Brain microvascular endothelial cell (primary cell): ENCODE measurements at regions of chr3 and their contacts with region 1.

Region 1: DNA sequence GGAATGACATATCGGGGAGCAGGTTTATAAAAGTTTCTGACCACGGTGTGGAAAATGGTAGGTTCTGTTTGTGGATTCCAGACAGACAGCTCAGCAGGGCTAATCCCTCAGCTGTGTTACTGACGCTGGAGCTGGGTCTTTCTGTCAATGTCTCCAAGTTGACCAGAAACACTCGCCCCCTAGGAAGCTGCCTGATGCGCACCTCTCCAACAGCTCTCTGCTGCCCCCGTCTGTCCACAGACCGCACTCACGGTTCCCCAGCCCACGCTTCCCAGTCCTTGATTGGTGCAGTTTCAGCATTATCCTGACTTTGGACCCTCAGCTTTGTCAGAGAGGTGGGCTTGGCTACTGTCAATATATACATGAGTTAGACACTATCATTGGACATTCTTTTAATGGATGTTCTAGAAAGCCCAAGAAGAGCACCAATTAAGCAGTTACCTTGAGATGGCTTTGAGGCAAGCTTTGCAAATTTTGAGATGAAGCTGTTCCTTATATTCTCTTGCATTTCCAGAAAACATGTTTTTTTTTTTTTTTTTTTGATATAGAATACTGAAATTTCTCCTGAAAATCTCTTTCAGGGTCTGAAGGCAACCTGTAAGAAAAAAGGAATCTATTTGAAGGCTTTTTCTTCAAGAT is 98.9 kb upstream of the TBC1D5 start:
- DNase-seq: peak; percentile 63
- H3K4me3 ChIP-seq: no peak overlapping the region
- H3K27ac ChIP-seq: no peak overlapping the region
- H3K27me3 ChIP-seq: no peaks in the 10 kb centered on the region
- CTCF ChIP-seq: peak; percentile 98

Region 2: GRCh38 chr3:17605032-17605431 is 236.3 kb before region 1 on chr3:
- in situ Hi-C with region 1: loop called (anchors 25 kb)
- DNase-seq: peak; percentile 32
- H3K4me3 ChIP-seq: no peak overlapping the region
- H3K27ac ChIP-seq: no peak overlapping the region
- H3K27me3 ChIP-seq: no peaks in the 10 kb centered on the region
- CTCF ChIP-seq: no peak

Region 3: DNA sequence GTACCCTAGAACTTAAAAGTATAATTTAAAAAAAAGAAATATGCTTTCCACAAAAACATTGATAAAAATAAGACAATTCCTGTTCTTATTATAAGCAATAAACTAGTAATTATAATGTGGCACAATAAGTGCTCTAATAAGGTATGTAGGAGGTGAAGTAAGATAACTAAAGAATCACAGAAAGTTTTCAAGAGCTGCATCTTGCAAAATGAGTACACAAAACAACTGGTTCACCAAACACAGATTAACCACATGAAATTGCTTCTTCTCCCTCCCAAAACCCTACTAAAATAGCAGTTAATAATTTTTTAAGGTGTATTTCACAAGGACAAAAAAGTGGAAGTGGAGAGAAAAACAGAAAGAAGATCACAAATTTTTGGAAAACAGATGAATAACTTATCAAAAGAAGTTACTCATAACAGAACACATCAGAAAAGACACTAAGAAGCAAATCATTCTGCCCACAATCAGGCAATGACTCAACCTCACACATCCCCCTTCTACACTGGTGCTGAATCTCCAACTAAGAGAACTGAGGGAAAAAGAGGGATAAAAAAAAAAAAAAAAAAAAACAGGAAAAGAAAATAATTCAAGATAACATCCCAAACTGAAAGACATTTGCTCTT is 163.1 kb before region 1 on chr3:
- in situ Hi-C with region 1: no loop called
- DNase-seq: peak; percentile 72
- H3K4me3 ChIP-seq: no peak overlapping the region
- H3K27ac ChIP-seq: no peak overlapping the region
- H3K27me3 ChIP-seq: no peaks in the 10 kb centered on the region
- CTCF ChIP-seq: no peak